CD4-positive, alpha-beta memory T cell (primary cell): ENCODE measurements at regions of chr5 and their contacts with region 1.

Region 1: DNA sequence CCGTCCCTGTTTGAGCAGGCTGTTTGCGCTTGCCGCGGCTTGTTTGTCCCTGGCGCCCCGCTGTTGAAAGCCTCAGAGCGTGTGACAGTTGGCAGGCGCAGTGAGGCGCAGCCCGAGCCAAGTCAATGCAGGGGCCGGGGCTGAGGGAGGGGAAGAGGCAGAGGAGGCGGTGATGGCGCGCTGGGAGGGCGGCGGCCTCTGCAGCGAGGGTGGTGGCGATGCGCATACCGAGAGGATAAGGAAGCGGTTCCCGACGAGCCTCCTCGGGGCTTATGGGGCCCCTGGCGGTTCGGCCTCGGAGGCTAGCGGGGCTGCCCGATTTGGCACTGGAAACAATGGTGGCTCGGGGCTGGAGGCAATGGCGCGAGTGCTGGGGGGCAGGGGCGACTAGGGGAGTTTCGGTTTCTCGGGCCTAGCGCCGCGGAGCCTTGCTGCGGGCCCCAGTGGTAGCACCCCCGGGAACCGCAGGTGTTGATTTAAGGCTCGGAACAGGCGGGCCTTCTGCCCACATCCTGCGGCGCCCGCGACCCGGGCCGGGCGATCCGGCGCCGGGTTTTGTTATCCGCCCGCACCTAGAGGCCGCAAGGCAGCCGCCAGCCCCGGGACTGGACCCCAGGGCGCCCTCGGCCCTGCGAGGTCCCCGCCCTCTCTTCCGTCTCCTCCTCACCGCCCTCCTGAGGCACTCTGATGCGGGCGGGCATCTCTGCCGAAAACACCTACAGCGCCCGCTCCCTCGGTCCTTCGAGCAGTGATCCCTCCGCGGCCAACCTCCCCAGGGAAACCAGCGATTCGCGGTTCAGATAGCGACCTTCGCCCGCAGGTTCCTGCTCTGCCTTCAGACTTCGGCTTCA is 947 bp upstream of the LNPEP start:
- DNase-seq: peak; percentile 95 to 98 (median 98)
- H3K4me3 ChIP-seq: peak overlapping the region; percentile 60 to 97
- H3K4me3 Mint-ChIP-seq: peak overlapping the region; percentile 88 to 99 (median 94)
- H3K27ac ChIP-seq: peak overlapping the region; percentile 83
- H3K27ac Mint-ChIP-seq: peak overlapping the region; percentile 93 to 99 (median 97)
- H3K4me1 ChIP-seq: peaks cover 72% of the 10 kb centered on the region
- H3K4me1 Mint-ChIP-seq: peaks cover 43 to 82% (median 61%) of the 10 kb centered on the region in 4 donors
- H3K27me3 ChIP-seq: no peaks in the 10 kb centered on the region
- H3K27me3 Mint-ChIP-seq: no peaks in the 10 kb centered on the region

Region 2: DNA sequence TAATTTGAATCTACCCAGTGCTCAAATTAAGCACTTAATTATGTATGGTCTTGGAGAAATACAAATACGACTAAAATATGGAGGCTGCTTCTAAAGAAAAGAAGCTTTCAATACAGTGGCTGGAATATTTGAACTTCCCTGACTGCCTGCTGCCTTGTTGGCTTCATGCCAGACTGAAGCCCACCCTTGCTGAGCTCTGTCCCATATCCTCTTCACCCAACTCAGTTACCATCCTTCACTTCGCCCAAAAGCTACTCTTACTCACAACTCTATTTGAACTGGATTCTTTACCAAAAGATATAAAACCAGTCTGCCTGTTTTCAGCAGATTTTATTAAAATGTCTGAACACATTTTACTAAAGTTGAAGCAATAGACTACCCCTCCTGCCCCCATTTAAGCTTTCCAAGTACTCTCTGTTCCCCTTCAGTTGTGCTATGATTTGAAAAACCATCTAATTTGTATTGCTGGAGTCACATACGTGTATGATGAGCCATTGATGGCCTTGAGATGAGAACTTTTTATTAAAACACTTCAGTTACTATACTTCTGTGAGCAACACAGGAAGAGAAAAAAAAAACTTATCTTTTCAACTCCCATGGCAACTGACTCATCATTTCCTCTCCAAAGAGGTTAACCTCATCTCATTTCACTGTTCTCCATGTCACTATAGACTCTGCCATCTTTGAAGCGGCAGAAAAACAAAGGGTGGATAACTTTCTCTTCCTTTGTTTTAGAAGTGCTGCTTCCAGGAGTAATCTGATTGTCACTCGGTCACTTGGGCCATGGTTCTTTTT is 397.7 kb before region 1 on chr5:
- CTCF ChIA-PET with region 1: no interaction called
- POLR2A ChIA-PET with region 1: no interaction called
- intact Hi-C with region 1: loop called (anchors 10 kb)
- DNase-seq: peak; percentile 48 to 83 (median 75)
- H3K4me3 ChIP-seq: peak overlapping the region in 1 of 2 donors; percentile 1
- H3K4me3 Mint-ChIP-seq: peak overlapping the region; percentile 18 to 93 (median 76)
- H3K27ac ChIP-seq: peak overlapping the region; percentile 38
- H3K27ac Mint-ChIP-seq: peak overlapping the region; percentile 83 to 100 (median 94)
- H3K4me1 ChIP-seq: peaks cover 30% of the 10 kb centered on the region
- H3K4me1 Mint-ChIP-seq: peaks cover 23 to 41% (median 30%) of the 10 kb centered on the region in 4 donors
- H3K27me3 ChIP-seq: no peaks in the 10 kb centered on the region
- H3K27me3 Mint-ChIP-seq: no peaks in the 10 kb centered on the region

Region 3: GRCh38 chr5:96868603-96869371 is 66.1 kb before region 1 on chr5:
- CTCF ChIA-PET with region 1: interaction called, 26 read pairs
- POLR2A ChIA-PET with region 1: interaction called, 84 read pairs
- intact Hi-C with region 1: loop called (anchors 1 kb)
- DNase-seq: peak; percentile 42 to 68 (median 59)
- H3K4me3 ChIP-seq: no peak overlapping the region
- H3K4me3 Mint-ChIP-seq: no peak overlapping the region
- H3K27ac ChIP-seq: no peak overlapping the region
- H3K27ac Mint-ChIP-seq: peak overlapping the region in 2 of 7 donors; percentile 0 to 38
- H3K4me1 ChIP-seq: peaks cover 34% of the 10 kb centered on the region
- H3K4me1 Mint-ChIP-seq: peaks cover 29 to 45% (median 33%) of the 10 kb centered on the region in 4 donors
- H3K27me3 ChIP-seq: no peaks in the 10 kb centered on the region
- H3K27me3 Mint-ChIP-seq: peaks cover 0 to 2% of the 10 kb centered on the region in 2 donors

Region 4: GRCh38 chr5:96919754-96920197 is 15.2 kb before region 1 on chr5:
- CTCF ChIA-PET with region 1: interaction called, 4 read pairs
- POLR2A ChIA-PET with region 1: interaction called, 13 read pairs
- intact Hi-C with region 1: loop called (anchors 1 kb)
- DNase-seq: no peak
- H3K4me3 ChIP-seq: no peak overlapping the region
- H3K4me3 Mint-ChIP-seq: no peak overlapping the region
- H3K27ac ChIP-seq: no peak overlapping the region
- H3K27ac Mint-ChIP-seq: peak overlapping the region in 1 of 7 donors; percentile 83
- H3K4me1 ChIP-seq: peaks cover 9% of the 10 kb centered on the region
- H3K4me1 Mint-ChIP-seq: peaks cover 8 to 22% (median 10%) of the 10 kb centered on the region in 4 donors
- H3K27me3 ChIP-seq: no peaks in the 10 kb centered on the region
- H3K27me3 Mint-ChIP-seq: no peaks in the 10 kb centered on the region

Region 5: GRCh38 chr5:96973532-96974401 is 38.8 kb after region 1 on chr5:
- CTCF ChIA-PET with region 1: interaction called, 4 read pairs
- POLR2A ChIA-PET with region 1: interaction called, 14 read pairs
- intact Hi-C with region 1: no loop called
- DNase-seq: peak in 2 of 5 donors; percentile 26 to 38
- H3K4me3 ChIP-seq: no peak overlapping the region
- H3K4me3 Mint-ChIP-seq: peak overlapping the region; percentile 17 to 82 (median 61)
- H3K27ac ChIP-seq: no peak overlapping the region
- H3K27ac Mint-ChIP-seq: peak overlapping the region in 6 of 7 donors; percentile 7 to 85 (median 53)
- H3K4me1 ChIP-seq: peaks cover 77% of the 10 kb centered on the region
- H3K4me1 Mint-ChIP-seq: peaks cover 60 to 80% (median 69%) of the 10 kb centered on the region in 4 donors
- H3K27me3 ChIP-seq: no peaks in the 10 kb centered on the region
- H3K27me3 Mint-ChIP-seq: no peaks in the 10 kb centered on the region

Region 6: DNA sequence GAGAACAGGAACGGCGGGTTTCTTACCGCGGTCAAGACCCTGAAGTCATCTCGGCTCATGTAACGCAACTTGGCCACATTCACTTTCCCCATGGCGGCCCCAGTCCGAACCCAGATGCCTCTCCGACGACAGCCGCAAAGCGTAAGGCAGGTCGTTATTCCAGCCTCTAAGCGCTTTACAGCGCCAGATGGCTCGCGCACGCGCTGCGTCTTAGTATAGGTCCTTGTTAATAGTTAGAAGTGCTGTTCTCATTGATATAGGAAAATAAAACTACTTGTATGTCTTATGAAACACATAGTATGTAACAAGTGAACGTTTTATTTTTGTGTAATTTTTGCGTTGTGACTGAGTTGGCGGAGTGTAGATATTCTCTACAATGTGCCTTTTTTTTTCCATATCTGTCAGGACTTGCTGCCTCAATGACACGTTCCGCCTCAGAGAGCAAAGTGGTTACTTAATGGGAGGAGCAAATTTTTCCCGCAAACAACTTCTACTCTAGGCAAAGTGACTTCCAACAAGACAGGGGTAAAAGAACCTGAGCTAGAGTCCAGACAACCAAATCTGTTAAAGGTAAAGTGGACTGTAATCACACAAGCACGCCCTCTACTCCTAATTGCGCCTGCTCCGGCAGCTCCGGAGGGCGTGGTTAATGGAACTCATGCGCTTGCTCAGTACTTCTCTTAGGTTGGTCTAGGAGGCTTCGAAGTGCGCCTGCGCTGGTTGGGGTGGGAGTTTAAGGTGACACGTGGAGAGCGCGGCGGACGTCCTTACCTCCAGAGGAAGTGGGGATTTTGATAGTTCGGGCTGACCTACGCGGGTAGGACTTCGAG is 248.4 kb after region 1 on chr5 and contains the start of gene RIOK2:
- CTCF ChIA-PET with region 1: no interaction called
- POLR2A ChIA-PET with region 1: interaction called, 6 read pairs
- intact Hi-C with region 1: loop called (anchors 1 kb)
- DNase-seq: peak; percentile 91 to 94 (median 92)
- H3K4me3 ChIP-seq: peak within 1 kb of the TSS; percentile 77 to 87
- H3K4me3 Mint-ChIP-seq: peak within 1 kb of the TSS; percentile 94 to 99 (median 97)
- H3K27ac ChIP-seq: peak within 1 kb of the TSS; percentile 95
- H3K27ac Mint-ChIP-seq: peak within 1 kb of the TSS; percentile 99 to 100 (median 100)
- H3K4me1 ChIP-seq: peaks cover 29% of the 10 kb centered on the region
- H3K4me1 Mint-ChIP-seq: peaks cover 23 to 50% (median 38%) of the 10 kb centered on the region in 4 donors
- H3K27me3 ChIP-seq: no peaks in the 10 kb centered on the region
- H3K27me3 Mint-ChIP-seq: no peaks in the 10 kb centered on the region
- total RNA-seq, gene RIOK2: 38.2 to 40.8 TPM